ENCODE measurements at regions of chr7 and their contacts with region 1.

Region 1: GRCh38 chr7:43747309-43748105 is 11.0 kb upstream of the BLVRA start:
- DNase-seq: no peak
- CTCF ChIP-seq: no peak

Region 2: GRCh38 chr7:43735802-43736541 is 11.5 kb before region 1 on chr7:
- CTCF ChIA-PET with region 1: interaction called, 16 read pairs
- POLR2A ChIA-PET with region 1: interaction called, 3 read pairs
- DNase-seq: peak; percentile 50
- CTCF ChIP-seq: no peak

Region 3: GRCh38 chr7:43758029-43758821 is 10.7 kb after region 1 on chr7 and contains the start of gene BLVRA:
- CTCF ChIA-PET with region 1: interaction called, 18 read pairs
- POLR2A ChIA-PET with region 1: no interaction called
- DNase-seq: peak; percentile 90
- CTCF ChIP-seq: no peak

Region 4: GRCh38 chr7:43768201-43768886 is 20.8 kb after region 1 on chr7:
- CTCF ChIA-PET with region 1: no interaction called
- POLR2A ChIA-PET with region 1: no interaction called
- DNase-seq: no peak
- CTCF ChIP-seq: no peak

Region 5: GRCh38 chr7:44490351-44491200 is 743.1 kb after region 1 on chr7 and contains the start of gene NUDCD3:
- CTCF ChIA-PET with region 1: no interaction called
- POLR2A ChIA-PET with region 1: no interaction called
- DNase-seq: peak; percentile 92
- CTCF ChIP-seq: peak; percentile 2

Measured in GM10248 (cell line).